Right ventricle myocardium inferior (tissue), 1 donor: ENCODE measurements at regions of chr5 and their contacts with region 1.

Region 1: GRCh38 chr5:160021831-160022446 is 13.0 kb downstream of the TTC1 start:
- DNase-seq: no peak
- ATAC-seq: peak; percentile 87

Region 2: GRCh38 chr5:159797261-159797970 is 224.5 kb before region 1 on chr5:
- intact Hi-C with region 1: no loop called
- DNase-seq: no peak
- ATAC-seq: no peak

Region 3: GRCh38 chr5:160119142-160119904 is 97.4 kb after region 1 on chr5 and contains the start of gene PWWP2A:
- intact Hi-C with region 1: loop called (anchors 5 kb)
- DNase-seq: peak; percentile 99
- ATAC-seq: peak; percentile 98
- total RNA-seq, gene PWWP2A: 13.2 TPM

Region 4: GRCh38 chr5:160199410-160199911 is 177.5 kb after region 1 on chr5:
- intact Hi-C with region 1: loop called (anchors 2 kb)
- DNase-seq: peak; percentile 89
- ATAC-seq: peak; percentile 95

Region 5: DNA sequence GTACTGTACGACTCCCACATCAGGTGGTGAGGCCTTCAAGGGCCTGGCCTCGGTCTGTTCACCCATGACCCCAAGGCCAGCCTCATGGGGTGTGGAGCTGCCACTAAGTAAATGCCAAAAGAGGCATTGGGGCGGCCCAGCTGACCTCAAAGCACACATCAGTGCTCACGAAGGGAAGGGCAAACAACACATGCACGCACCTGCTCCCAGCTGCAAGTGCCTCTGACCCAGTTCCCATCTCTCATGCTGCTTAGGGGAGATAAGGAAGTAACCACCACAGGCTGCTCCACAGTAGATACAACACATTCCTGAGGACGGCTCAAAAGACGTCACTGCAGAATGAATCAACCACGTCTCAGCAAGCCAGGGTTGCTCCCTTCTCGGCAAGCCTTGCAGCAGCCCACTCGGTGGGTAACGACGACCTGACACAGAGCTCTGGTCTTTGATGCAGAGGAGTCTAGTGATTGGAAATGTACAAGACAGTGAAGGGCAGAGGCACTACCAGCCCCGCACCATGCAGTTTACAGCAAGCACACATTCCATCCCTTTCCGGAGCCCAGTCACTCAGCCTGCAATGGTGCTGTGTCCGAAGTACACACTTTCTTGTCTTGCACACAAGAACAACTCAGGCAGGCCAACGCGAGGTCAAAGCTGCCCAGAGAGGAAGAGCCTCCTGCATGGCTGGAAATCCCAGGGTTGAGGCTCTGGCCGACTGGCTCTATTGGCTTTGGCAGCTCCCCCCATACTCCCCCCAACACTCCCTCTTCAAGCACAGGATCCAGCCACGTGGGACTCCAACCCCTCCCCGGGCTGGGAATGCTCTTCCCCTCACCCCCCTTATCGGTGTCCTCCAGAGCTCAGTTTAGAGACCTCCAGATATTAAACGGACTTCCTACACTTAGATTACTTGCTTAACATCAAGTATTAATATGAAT is 239.2 kb after region 1 on chr5:
- intact Hi-C with region 1: loop called (anchors 10 kb)
- DNase-seq: no peak
- ATAC-seq: peak; percentile 73

Region 6: DNA sequence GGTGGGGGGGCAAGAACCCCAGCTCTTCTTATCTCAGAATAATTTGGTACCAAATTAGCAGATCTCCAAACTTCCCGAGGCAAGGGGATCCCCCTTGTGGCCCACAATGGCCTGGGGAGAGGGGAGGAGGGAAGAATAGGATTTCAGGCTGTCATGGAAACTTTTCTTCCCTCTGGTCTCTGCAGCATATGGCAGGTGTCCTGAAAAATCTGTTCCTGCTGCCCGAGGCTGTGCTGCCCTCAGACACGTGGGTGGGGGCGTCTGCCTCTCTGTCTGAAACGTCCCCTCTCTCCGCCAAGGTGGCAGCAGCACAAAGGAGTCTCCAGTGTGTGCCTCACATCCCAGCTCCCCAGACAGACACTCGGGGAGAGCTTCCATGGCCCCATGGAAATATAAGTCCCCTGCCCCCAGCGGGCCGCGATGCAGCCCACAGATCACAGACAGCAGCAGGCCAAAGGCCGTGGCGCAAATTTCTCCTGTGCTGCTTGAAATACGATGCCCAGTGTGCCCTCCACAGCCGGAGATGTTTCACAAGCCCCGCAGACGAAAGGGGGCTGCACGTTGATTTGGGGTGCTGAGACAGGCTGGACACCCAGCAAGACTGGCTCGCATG is 256.5 kb after region 1 on chr5:
- intact Hi-C with region 1: no loop called
- DNase-seq: no peak
- ATAC-seq: no peak

Region 7: DNA sequence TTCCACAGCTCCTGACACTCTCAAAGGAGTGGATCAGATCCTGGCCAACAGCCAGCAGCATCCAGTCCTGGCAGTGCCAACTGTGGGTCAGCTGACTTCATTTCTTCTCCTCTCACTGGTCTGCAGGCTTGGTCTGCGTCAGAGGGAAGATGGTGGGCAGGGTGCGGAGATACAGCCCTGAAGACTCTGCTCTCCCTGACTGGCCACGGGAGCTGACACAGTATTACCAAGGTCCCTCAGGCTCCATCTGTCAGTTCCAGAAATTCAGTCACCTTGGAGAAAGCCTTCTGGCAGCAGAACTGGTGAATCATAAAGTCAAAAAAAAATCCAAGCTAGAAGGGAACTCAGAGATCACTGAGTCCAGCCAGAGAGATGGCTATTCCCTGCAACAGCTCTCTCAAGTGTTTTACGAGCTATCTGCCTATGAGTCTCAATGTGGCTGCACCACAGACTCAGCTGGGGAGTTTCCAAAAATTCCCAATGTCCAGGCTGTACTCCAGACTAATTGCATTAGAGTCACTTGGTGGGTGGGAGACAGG is 320.5 kb after region 1 on chr5:
- intact Hi-C with region 1: loop called (anchors 2 kb)
- DNase-seq: no peak
- ATAC-seq: no peak

Region 8: GRCh38 chr5:160390787-160391696 is 369.1 kb after region 1 on chr5:
- intact Hi-C with region 1: loop called (anchors 5 kb)
- DNase-seq: no peak
- ATAC-seq: no peak